ENCODE measurements at regions of chr4 and their contacts with region 1.

Region 1: GRCh38 chr4:86921608-86922252 is 13.1 kb upstream of the AFF1 start:
- DNase-seq: no peak
- H3K4me3 ChIP-seq: no peak overlapping the region
- H3K27ac ChIP-seq: no peak overlapping the region
- H3K4me1 ChIP-seq: peaks cover 12% of the 10 kb centered on the region
- CTCF ChIP-seq: no peak

Region 2: DNA sequence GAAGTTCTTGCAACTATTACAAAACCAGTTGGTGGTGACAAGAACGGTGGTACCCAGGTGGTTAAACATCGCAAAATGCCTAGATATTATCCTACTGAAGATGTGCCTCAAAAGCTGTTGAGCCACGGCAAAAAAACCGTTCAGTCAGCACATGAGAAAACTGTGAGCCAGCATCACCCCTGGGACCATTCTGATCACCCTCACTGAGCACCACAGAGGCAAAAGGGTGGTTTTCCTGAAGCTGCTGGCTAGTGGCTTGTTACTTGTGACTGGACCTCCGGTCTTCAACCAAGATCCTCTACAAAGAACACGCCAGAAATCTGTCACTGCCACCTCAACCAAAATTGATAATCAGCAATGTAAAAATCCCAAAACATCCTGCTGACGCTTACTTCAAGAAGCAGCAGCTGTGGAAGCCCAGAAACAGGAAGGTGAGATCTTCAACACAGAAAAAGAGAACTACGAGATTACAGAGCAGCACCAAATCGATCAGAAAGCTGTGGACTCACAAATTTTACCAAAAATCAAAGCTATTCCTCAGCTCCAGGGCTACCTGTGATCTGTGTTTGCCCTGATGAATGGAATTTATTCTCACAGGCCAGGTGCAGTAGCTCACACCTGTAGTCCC is 51.2 kb before region 1 on chr4:
- CTCF ChIA-PET with region 1: no interaction called
- POLR2A ChIA-PET with region 1: no interaction called
- intact Hi-C with region 1: no loop called
- DNase-seq: no peak
- H3K4me3 ChIP-seq: no peak overlapping the region
- H3K27ac ChIP-seq: no peak overlapping the region
- H3K4me1 ChIP-seq: no peaks in the 10 kb centered on the region
- CTCF ChIP-seq: no peak

Region 3: DNA sequence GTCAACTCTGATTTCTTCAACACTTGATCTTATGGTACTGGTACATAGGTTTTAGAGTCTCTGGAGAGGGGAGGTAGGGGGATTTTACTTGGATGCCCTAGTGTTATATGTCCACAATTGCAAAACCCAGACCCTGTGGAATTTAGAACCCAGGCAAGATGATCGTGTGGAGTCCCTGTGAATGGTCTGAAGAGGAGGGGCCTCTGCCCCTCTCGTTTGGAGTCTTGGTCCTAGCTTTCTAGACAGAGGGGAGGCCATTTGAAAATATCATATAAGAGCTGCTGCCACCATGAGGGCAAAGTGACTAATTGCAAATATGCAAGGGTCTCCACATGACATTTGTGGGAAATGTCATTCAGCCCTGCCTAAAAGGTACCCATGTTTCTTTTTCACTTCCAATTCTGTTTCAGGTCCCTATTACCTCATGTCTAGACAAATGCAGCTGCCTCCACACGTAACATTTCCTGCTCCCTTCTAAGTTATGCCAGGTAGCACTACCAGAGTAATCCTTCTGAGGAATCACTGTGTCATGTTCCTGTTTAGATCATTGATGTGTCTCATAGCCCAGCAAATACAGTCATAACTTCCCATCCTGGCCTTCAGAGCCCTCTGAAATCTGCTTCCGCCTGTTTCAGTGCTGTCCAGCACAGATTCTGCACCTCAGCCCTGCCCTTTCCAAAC is 171.9 kb after region 1 on chr4:
- CTCF ChIA-PET with region 1: interaction called, 22 read pairs
- POLR2A ChIA-PET with region 1: interaction called, 10 read pairs
- intact Hi-C with region 1: loop called (anchors 1 kb)
- DNase-seq: peak; percentile 80
- H3K4me3 ChIP-seq: no peak overlapping the region
- H3K27ac ChIP-seq: no peak overlapping the region
- H3K4me1 ChIP-seq: peaks cover 22% of the 10 kb centered on the region
- CTCF ChIP-seq: peak; percentile 88

Measured in OCI-LY7 (cell line).